ENCODE measurements at regions of chr17 and their contacts with region 1.

Region 1: DNA sequence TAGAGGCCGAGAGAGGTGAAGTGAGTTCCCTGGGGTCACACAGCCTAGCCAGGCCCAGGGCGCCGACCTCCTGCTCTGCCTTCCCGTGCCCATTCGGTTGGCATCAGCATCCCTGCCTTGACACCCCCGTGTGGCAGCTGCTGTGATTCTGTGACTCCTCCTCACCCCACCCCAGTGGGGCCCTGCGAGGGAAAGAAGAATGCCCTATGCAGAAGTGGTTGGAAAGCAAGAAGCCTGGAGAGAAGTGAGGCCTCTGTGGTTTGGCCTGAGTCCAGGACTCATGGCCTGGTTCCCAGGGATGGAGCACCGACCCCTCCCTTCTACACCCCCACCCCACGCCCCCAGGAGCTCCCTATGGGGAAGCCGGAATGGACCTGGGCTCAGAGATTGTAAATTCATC is 296.2 kb downstream of the SEC14L1 start:
- DNase-seq: peak in 5 of 14 experiments; percentile 34 to 68 (median 67)
- ATAC-seq: no peak
- H3K4me3 ChIP-seq: peak overlapping the region; percentile 55
- H3K4me3 Mint-ChIP-seq: peak overlapping the region; percentile 96
- H3K27ac ChIP-seq: peak overlapping the region; percentile 79 to 98
- H3K27ac Mint-ChIP-seq: peak overlapping the region; percentile 93
- H3K4me1 ChIP-seq: peaks cover 100% of the 10 kb centered on the region
- H3K4me1 Mint-ChIP-seq: peaks cover 97% of the 10 kb centered on the region
- H3K27me3 ChIP-seq: no peaks in the 10 kb centered on the region
- H3K27me3 Mint-ChIP-seq: no peaks in the 10 kb centered on the region
- CTCF ChIP-seq: no peak

Region 2: DNA sequence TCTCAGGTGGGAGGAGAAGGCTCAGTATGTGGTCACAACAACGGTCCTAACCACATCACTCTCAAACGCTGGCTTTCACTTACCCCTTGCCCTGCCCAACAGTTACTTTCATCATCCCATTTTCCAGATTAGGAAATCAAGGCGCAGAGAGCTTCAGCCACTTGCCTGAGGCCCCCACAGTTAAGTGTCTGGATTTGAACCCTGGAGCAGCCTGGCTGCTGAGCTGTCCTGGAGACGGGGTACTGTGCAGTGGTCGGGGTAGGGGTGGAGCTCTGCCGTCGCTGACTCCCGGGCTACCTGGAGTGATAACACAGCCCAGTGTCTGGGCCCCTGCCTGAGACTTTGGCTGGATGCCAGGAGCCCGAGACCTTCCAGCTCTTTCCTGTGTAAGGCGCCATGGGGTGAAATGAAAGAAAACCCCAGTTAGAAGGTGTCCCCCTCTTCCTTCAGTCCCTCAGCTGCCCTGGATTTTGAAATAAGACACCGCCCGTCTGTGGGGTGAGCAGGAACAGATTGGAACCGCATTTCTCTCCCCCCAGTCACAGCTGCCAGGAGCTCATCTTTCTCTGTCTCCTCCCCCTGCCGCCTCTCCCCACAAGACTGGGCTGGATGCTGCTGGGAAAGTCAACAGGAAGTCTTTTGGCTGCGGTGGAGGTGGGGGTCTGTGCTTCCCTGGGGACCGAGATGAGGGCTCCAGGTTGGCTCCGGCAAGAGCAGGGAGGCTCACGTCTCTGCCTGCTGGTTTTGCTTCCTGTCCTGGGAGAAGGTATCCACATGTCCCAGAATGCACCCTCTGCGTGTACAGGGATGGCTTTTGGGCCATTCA is 16.0 kb before region 1 on chr17:
- CTCF ChIA-PET with region 1: interaction called, 6 read pairs
- POLR2A ChIA-PET with region 1: interaction called, 133 read pairs
- intact Hi-C with region 1: no loop called
- DNase-seq: peak; percentile 44 to 82 (median 66)
- ATAC-seq: peak; percentile 69
- H3K4me3 ChIP-seq: peak overlapping the region; percentile 31
- H3K4me3 Mint-ChIP-seq: peak overlapping the region; percentile 83
- H3K27ac ChIP-seq: peak overlapping the region; percentile 61 to 76
- H3K27ac Mint-ChIP-seq: peak overlapping the region; percentile 89
- H3K4me1 ChIP-seq: peaks cover 92% of the 10 kb centered on the region
- H3K4me1 Mint-ChIP-seq: peaks cover 65% of the 10 kb centered on the region
- H3K27me3 ChIP-seq: no peaks in the 10 kb centered on the region
- H3K27me3 Mint-ChIP-seq: no peaks in the 10 kb centered on the region
- CTCF ChIP-seq: no peak

Region 3: DNA sequence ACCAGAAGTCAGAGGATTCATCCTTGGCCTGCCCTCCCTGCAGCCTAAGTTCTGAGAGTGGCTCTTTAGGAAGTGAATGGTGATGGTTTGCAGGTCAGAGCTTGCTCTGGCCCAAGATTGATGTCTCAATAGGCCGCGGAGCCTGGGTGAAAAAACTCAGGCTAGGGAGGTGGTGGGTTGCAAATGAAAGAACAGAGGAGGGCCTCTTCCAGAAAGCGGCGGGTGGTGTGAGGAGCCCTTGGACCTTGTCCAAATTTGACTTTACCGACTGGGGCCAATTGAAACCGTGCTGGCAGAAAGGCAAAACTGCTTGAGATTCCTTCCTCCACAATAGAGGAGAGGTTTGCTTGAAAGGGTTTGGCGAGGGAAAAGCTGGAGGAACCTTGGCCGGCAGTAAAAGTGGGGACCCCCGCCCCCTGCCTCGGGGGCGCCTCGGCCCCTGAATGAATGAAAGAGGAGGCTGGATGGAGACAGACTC is 35.0 kb after region 1 on chr17:
- CTCF ChIA-PET with region 1: interaction called, 4 read pairs
- POLR2A ChIA-PET with region 1: interaction called, 681 read pairs
- intact Hi-C with region 1: loop called in 1 of 2 experiments (anchors 2 kb)
- DNase-seq: no peak
- ATAC-seq: no peak
- H3K4me3 ChIP-seq: peak overlapping the region; percentile 25
- H3K4me3 Mint-ChIP-seq: peak overlapping the region; percentile 79
- H3K27ac ChIP-seq: peak overlapping the region; percentile 40 to 62
- H3K27ac Mint-ChIP-seq: peak overlapping the region; percentile 97
- H3K4me1 ChIP-seq: peaks cover 99% of the 10 kb centered on the region
- H3K4me1 Mint-ChIP-seq: peaks cover 96% of the 10 kb centered on the region
- H3K27me3 ChIP-seq: no peaks in the 10 kb centered on the region
- H3K27me3 Mint-ChIP-seq: no peaks in the 10 kb centered on the region
- CTCF ChIP-seq: no peak

Region 4: GRCh38 chr17:77590951-77591735 is 154.1 kb after region 1 on chr17:
- CTCF ChIA-PET with region 1: no interaction called
- POLR2A ChIA-PET with region 1: no interaction called
- intact Hi-C with region 1: no loop called
- DNase-seq: no peak
- ATAC-seq: no peak
- H3K4me3 ChIP-seq: no peak overlapping the region
- H3K4me3 Mint-ChIP-seq: no peak overlapping the region
- H3K27ac ChIP-seq: no peak overlapping the region
- H3K27ac Mint-ChIP-seq: no peak overlapping the region
- H3K4me1 ChIP-seq: no peaks in the 10 kb centered on the region
- H3K4me1 Mint-ChIP-seq: peaks cover 8% of the 10 kb centered on the region
- H3K27me3 ChIP-seq: no peaks in the 10 kb centered on the region
- H3K27me3 Mint-ChIP-seq: peaks cover 12% of the 10 kb centered on the region
- CTCF ChIP-seq: no peak